PC-3 (cell line): ENCODE measurements at regions of chr13 and their contacts with region 1.

Region 1: GRCh38 chr13:51583875-51584730 is at the start of gene WDFY2:
- DNase-seq: peak; percentile 98
- ATAC-seq: peak; percentile 75
- H3K4me3 ChIP-seq: peak within 1 kb of the TSS; percentile 90
- H3K27ac ChIP-seq: peak within 1 kb of the TSS; percentile 60
- H3K4me1 ChIP-seq: peaks cover 17% of the 10 kb centered on the region
- H3K27me3 ChIP-seq: no peaks in the 10 kb centered on the region
- CTCF ChIP-seq: no peak
- total RNA-seq, gene WDFY2: 4.1 and 5.9 TPM in 2 replicates

Region 2: DNA sequence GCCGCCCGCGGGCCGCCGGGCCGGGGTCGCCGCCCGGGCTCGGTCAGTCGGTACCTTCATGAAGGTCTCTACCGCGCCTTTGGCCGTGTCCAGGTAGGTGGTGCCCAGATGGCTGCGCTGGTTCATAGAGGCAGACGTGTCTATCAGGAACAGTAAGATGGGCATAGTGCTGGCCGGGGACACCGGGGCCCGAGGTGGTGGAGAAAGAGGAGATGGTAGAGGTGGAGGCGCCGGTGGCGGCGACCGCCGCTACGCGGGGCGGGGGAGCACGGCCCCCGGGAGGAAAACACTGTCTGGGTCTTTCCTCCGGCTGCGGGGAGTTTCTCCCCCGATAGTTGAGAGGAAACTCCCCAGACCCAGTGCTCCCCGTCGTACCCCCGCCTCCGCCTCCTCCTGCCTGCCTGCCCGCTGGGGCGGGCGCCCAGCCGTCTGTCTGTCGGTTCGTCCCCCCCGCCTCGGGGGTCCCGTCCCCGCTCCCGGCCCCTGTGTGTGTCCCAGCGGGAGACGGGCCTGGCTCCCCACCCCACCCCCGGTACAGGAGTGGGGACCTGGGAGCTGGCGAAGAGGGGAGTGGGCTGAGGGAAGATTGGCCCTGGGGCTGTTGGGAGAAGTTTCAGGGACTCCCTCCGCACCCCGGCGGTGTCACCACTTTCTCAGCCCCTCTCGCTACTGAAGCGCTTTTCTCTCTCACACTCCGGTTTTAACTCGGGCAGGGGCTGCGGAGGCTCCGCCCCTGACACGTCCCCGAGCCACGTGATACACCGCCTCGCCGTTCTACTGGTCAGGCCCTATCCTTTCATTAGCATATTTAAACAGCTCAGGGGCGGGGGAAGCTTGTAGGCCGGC is 131.5 kb before region 1 on chr13 and contains the start of gene INTS6:
- CTCF ChIA-PET with region 1: no interaction called
- POLR2A ChIA-PET with region 1: interaction called, 9 read pairs
- intact Hi-C with region 1: loop called (anchors 1 kb)
- DNase-seq: peak; percentile 96
- ATAC-seq: peak; percentile 88
- H3K4me3 ChIP-seq: peak within 1 kb of the TSS; percentile 94
- H3K27ac ChIP-seq: peak within 1 kb of the TSS; percentile 81
- H3K4me1 ChIP-seq: peaks cover 23% of the 10 kb centered on the region
- H3K27me3 ChIP-seq: no peaks in the 10 kb centered on the region
- CTCF ChIP-seq: no peak
- total RNA-seq, gene INTS6: 19.9 and 26.6 TPM in 2 replicates

Region 3: GRCh38 chr13:51681037-51681678 is 97.1 kb after region 1 on chr13:
- CTCF ChIA-PET with region 1: no interaction called
- POLR2A ChIA-PET with region 1: no interaction called
- intact Hi-C with region 1: loop called (anchors 1 kb)
- DNase-seq: peak; percentile 91
- ATAC-seq: peak; percentile 98
- H3K4me3 ChIP-seq: no peak overlapping the region
- H3K27ac ChIP-seq: peak overlapping the region; percentile 77
- H3K4me1 ChIP-seq: peaks cover 27% of the 10 kb centered on the region
- H3K27me3 ChIP-seq: no peaks in the 10 kb centered on the region
- CTCF ChIP-seq: no peak

Region 4: GRCh38 chr13:51729866-51730546 is 145.9 kb after region 1 on chr13:
- CTCF ChIA-PET with region 1: no interaction called
- POLR2A ChIA-PET with region 1: no interaction called
- intact Hi-C with region 1: loop called (anchors 2 kb)
- DNase-seq: peak; percentile 74
- ATAC-seq: peak; percentile 87
- H3K4me3 ChIP-seq: no peak overlapping the region
- H3K27ac ChIP-seq: peak overlapping the region; percentile 73
- H3K4me1 ChIP-seq: peaks cover 19% of the 10 kb centered on the region
- H3K27me3 ChIP-seq: no peaks in the 10 kb centered on the region
- CTCF ChIP-seq: no peak

Region 5: DNA sequence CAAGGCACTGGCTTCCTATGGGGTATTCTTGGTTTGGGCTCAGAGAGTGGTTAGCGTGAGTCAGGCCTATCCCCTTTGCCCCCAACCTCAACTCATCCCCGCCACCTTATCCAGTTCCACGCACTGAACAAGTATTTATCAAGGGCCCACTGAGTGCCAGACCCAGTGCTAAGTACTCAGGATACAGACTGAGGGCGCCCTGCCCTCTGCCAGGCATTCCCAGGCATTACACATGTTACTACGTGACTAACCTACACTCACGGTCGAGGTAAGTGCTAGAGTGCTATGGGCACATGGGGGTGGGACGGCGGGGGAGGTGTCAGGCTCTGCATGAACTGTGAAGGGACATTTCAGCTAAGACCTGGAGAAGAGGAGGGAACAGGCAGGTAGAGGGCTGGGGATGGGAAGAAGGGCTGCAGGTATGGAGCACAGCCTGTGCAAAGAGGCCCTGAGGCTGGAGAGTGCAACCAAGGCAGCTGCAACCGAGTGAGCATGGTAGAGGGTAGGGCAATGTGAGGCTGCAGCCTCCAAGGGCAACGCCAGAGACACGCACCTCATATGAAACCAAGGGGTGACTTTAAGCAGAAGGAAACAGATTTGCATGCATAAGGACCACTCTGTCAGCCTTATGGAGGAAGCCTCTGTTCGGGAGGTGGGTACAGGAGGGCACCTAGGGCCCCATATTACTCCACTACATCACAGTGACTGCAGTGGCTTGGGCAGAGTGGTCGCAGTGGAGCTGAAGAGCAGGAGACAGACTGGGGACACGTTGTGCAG is 197.3 kb after region 1 on chr13:
- CTCF ChIA-PET with region 1: no interaction called
- POLR2A ChIA-PET with region 1: no interaction called
- intact Hi-C with region 1: no loop called
- DNase-seq: peak; percentile 60
- ATAC-seq: peak; percentile 90
- H3K4me3 ChIP-seq: no peak overlapping the region
- H3K27ac ChIP-seq: no peak overlapping the region
- H3K4me1 ChIP-seq: no peaks in the 10 kb centered on the region
- H3K27me3 ChIP-seq: no peaks in the 10 kb centered on the region
- CTCF ChIP-seq: peak; percentile 68

Region 6: GRCh38 chr13:52348983-52349780 is 765.1 kb after region 1 on chr13:
- CTCF ChIA-PET with region 1: no interaction called
- POLR2A ChIA-PET with region 1: no interaction called
- intact Hi-C with region 1: no loop called
- DNase-seq: peak; percentile 69
- ATAC-seq: peak; percentile 84
- H3K4me3 ChIP-seq: no peak overlapping the region
- H3K27ac ChIP-seq: peak overlapping the region; percentile 18
- H3K4me1 ChIP-seq: peaks cover 13% of the 10 kb centered on the region
- H3K27me3 ChIP-seq: no peaks in the 10 kb centered on the region
- CTCF ChIP-seq: no peak